ENCODE measurements at regions of chr1 and their contacts with region 1.

Region 1: GRCh38 chr1:109201123-109201703 is 12.5 kb upstream of the SARS1 start:
- DNase-seq: no peak
- ATAC-seq: peak; percentile 59
- H3K4me3 ChIP-seq: no peak overlapping the region
- H3K27ac ChIP-seq: no peak overlapping the region
- H3K4me1 ChIP-seq: peaks cover 18 to 35% of the 10 kb centered on the region in 2 experiments
- H3K27me3 ChIP-seq: no peaks in the 10 kb centered on the region
- CTCF ChIP-seq: peak; percentile 71 to 91 (median 89); a peak in 5 of 6 replicates
- POLR2A ChIP-seq: no peak
- RAD21 ChIP-seq: peak; percentile 81

Region 2: GRCh38 chr1:109213785-109214468 is 12.7 kb after region 1 on chr1 and contains the start of gene SARS1:
- CTCF ChIA-PET with region 1: interaction called, 22 read pairs
- POLR2A ChIA-PET with region 1: interaction called, 6 read pairs
- RAD21 ChIA-PET with region 1: no interaction called
- intact Hi-C with region 1: no loop called
- DNase-seq: peak; percentile 57
- ATAC-seq: peak; percentile 93
- H3K4me3 ChIP-seq: peak within 1 kb of the TSS; percentile 88 to 96
- H3K27ac ChIP-seq: peak within 1 kb of the TSS; percentile 72
- H3K4me1 ChIP-seq: peaks cover 9 to 31% of the 10 kb centered on the region in 2 experiments
- H3K27me3 ChIP-seq: no peaks in the 10 kb centered on the region
- CTCF ChIP-seq: no peak
- POLR2A ChIP-seq: no peak
- RAD21 ChIP-seq: no peak
- total RNA-seq, gene SARS1: 206 TPM

Region 3: GRCh38 chr1:109263597-109264398 is 62.6 kb after region 1 on chr1:
- CTCF ChIA-PET with region 1: interaction called, 3 read pairs
- POLR2A ChIA-PET with region 1: no interaction called
- RAD21 ChIA-PET with region 1: no interaction called
- intact Hi-C with region 1: loop called (anchors 2 kb)
- DNase-seq: peak; percentile 88
- ATAC-seq: peak; percentile 96
- H3K4me3 ChIP-seq: no peak overlapping the region
- H3K27ac ChIP-seq: peak overlapping the region; percentile 2; the same call in 1 of the 2 replicates
- H3K4me1 ChIP-seq: peaks cover 0 to 9% of the 10 kb centered on the region in 2 experiments; a peak in 2 of 4 replicates
- H3K27me3 ChIP-seq: no peaks in the 10 kb centered on the region
- CTCF ChIP-seq: peak; percentile 99 to 100 (median 99)
- POLR2A ChIP-seq: no peak
- RAD21 ChIP-seq: peak; percentile 96

Region 4: GRCh38 chr1:110019770-110020169 is 818.6 kb after region 1 on chr1:
- CTCF ChIA-PET with region 1: no interaction called
- POLR2A ChIA-PET with region 1: no interaction called
- RAD21 ChIA-PET with region 1: no interaction called
- intact Hi-C with region 1: no loop called
- DNase-seq: no peak
- ATAC-seq: no peak
- H3K4me3 ChIP-seq: no peak overlapping the region
- H3K27ac ChIP-seq: no peak overlapping the region
- H3K4me1 ChIP-seq: no peaks in the 10 kb centered on the region
- H3K27me3 ChIP-seq: no peaks in the 10 kb centered on the region
- CTCF ChIP-seq: no peak
- POLR2A ChIP-seq: no peak
- RAD21 ChIP-seq: no peak

Measured in HCT116 (cell line).